OCI-LY7 (cell line): ENCODE measurements at regions of chr4 and their contacts with region 1.

Region 1: GRCh38 chr4:151530783-151531182 is 121.8 kb downstream of the FHIP1A start:
- DNase-seq: peak; percentile 5
- H3K4me3 ChIP-seq: no peak overlapping the region
- H3K27ac ChIP-seq: no peak overlapping the region
- H3K4me1 ChIP-seq: no peaks in the 10 kb centered on the region
- CTCF ChIP-seq: peak; percentile 67

Region 2: GRCh38 chr4:151604238-151604637 is 73.5 kb after region 1 on chr4:
- CTCF ChIA-PET with region 1: no interaction called
- POLR2A ChIA-PET with region 1: interaction called, 4 read pairs
- intact Hi-C with region 1: loop called (anchors 5 kb)
- DNase-seq: peak; percentile 37
- H3K4me3 ChIP-seq: no peak overlapping the region
- H3K27ac ChIP-seq: no peak overlapping the region
- H3K4me1 ChIP-seq: no peaks in the 10 kb centered on the region
- CTCF ChIP-seq: peak; percentile 76